PC-3 (cell line): ENCODE measurements at regions of chr6 and their contacts with region 1.

Region 1: DNA sequence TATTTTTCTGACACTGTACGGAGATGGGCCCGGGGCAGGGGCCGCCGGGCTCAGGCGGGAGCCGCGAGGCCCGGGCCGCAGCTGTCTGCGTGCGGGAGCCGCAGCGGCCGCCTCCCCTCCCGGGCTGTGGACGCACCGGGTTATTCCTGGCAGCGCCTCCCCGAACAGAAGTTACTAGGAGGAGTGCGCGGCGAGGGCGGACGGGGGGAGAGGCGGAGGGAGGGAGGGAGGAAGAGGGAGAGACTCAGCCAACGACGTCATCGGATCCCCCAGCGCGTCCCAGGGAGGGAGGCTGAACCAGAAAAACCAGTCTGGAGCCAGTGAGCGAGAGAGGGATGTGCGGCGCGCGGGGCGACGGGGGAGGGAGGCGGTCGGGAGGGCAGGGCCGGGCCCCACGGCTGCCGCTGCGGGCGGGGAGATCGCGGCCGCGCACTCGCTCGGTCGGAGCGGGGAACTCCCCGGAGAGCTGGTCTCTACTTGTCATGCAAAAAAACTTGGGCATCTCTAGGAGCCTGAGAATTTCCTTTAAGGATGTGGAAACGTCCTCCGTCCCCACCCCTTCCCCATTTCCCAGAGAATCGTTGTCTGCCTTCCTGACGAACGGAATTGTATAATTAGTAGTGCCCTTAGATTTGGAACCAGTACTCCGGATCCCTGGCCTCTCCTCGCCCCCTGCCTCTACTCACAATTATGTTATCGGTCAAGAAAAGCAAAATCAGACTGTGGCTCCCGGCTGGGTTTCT is 1.4 kb upstream of the HIVEP2 start:
- DNase-seq: peak; percentile 96
- ATAC-seq: peak; percentile 54
- H3K4me3 ChIP-seq: peak overlapping the region; percentile 94
- H3K27ac ChIP-seq: peak overlapping the region; percentile 92
- H3K4me1 ChIP-seq: peaks cover 23% of the 10 kb centered on the region
- H3K27me3 ChIP-seq: no peaks in the 10 kb centered on the region
- CTCF ChIP-seq: no peak

Region 2: GRCh38 chr6:142833054-142833453 is 113.3 kb before region 1 on chr6:
- CTCF ChIA-PET with region 1: no interaction called
- POLR2A ChIA-PET with region 1: no interaction called
- intact Hi-C with region 1: loop called (anchors 2 kb)
- DNase-seq: peak; percentile 93
- ATAC-seq: peak; percentile 90
- H3K4me3 ChIP-seq: no peak overlapping the region; the same call in 1 of the 2 replicates
- H3K27ac ChIP-seq: peak overlapping the region; percentile 91
- H3K4me1 ChIP-seq: peaks cover 23% of the 10 kb centered on the region
- H3K27me3 ChIP-seq: no peaks in the 10 kb centered on the region
- CTCF ChIP-seq: no peak

Region 3: DNA sequence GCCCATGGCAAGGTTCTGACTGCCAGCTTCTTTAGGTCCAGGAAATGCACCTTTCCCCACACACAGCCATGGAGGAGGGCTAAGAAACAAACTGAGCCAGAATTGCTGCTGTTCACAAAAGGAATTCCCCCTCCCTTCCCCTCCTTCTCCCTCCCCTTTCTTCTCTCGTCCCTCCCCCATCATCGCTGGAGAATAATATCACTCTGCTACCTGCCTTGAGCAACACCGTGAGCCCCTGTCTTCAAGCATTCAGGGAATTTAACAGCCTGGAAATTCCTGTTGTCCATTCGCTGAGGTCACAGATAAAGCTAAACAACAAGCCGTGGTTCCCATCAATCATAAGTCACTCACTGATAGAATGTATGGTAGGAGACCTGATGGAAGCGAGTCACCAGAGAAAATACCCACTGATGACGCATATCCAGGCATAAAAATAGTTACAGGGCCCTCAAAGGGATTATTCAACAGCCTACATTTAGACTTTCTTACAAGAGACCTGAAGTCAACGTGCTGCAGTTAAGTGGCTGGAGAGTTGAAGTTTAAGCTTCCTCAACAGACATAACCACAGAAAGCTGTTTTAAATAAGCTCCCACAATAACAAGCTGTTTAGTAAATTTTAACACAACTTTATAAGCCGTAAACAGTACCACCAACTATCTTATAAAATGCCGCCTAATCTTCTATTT is 61.0 kb before region 1 on chr6:
- CTCF ChIA-PET with region 1: no interaction called
- POLR2A ChIA-PET with region 1: interaction called, 3 read pairs
- intact Hi-C with region 1: loop called (anchors 5 kb)
- DNase-seq: peak; percentile 94
- ATAC-seq: peak; percentile 90
- H3K4me3 ChIP-seq: peak overlapping the region; percentile 26; the same call in 1 of the 2 replicates
- H3K27ac ChIP-seq: peak overlapping the region; percentile 96
- H3K4me1 ChIP-seq: peaks cover 38% of the 10 kb centered on the region
- H3K27me3 ChIP-seq: no peaks in the 10 kb centered on the region
- CTCF ChIP-seq: no peak

Region 4: DNA sequence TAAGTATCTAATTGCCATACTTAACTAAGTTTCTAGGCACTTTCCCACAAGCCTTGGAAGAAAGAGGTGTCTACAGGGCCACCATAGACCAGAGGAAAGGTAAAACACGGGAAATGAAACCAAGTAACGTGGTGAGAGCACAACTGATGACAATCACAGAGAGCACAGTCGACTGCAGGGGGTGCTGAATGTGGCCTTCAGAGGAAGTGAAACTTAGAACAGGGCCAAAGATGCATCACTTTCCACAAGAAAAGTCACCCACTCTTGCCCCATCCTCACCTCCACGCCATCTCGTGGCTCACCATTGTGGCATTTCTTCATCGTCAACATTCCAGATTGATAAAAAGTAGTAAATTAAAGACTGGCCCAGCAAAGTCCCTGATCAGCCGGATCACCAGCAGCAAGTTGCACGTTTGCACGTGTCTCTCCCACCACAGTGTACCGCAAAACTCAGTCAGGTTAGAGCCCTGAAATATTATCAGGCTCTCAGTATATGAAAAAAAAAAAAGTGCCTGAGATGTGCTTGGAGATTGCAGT is 32.8 kb before region 1 on chr6:
- CTCF ChIA-PET with region 1: no interaction called
- POLR2A ChIA-PET with region 1: no interaction called
- intact Hi-C with region 1: no loop called
- DNase-seq: no peak
- ATAC-seq: no peak
- H3K4me3 ChIP-seq: no peak overlapping the region
- H3K27ac ChIP-seq: no peak overlapping the region
- H3K4me1 ChIP-seq: no peaks in the 10 kb centered on the region
- H3K27me3 ChIP-seq: no peaks in the 10 kb centered on the region
- CTCF ChIP-seq: no peak

Region 5: GRCh38 chr6:143060354-143060805 is 114.0 kb after region 1 on chr6:
- CTCF ChIA-PET with region 1: no interaction called
- POLR2A ChIA-PET with region 1: no interaction called
- intact Hi-C with region 1: loop called (anchors 1 kb)
- DNase-seq: peak; percentile 67
- ATAC-seq: peak; percentile 73
- H3K4me3 ChIP-seq: peak overlapping the region; percentile 90
- H3K27ac ChIP-seq: peak overlapping the region; percentile 89
- H3K4me1 ChIP-seq: peaks cover 22% of the 10 kb centered on the region
- H3K27me3 ChIP-seq: no peaks in the 10 kb centered on the region
- CTCF ChIP-seq: peak; percentile 20; the same call in 1 of the 2 replicates

Region 6: DNA sequence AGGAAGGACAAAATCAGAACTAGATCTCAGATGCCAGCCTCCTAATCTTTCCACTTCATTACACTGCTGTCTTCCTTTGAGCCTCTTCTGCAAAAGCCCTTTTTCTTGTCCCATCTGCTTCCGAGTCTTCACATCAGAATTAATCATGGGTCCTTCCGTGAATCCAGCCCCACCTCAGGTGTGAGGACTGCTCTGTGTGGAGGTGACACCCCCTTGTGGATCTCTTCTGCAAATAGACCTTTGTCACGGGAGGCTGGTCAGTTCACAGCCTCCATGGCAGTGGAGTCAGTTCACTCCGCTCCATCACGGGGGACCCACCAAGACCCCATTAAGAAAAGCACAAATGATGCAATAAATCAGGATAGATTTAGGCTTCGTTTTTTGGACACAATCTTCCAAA is 333.0 kb after region 1 on chr6:
- CTCF ChIA-PET with region 1: no interaction called
- POLR2A ChIA-PET with region 1: no interaction called
- intact Hi-C with region 1: loop called (anchors 10 kb)
- DNase-seq: peak; percentile 25
- ATAC-seq: no peak; the same call in 1 of the 2 replicates
- H3K4me3 ChIP-seq: no peak overlapping the region
- H3K27ac ChIP-seq: no peak overlapping the region
- H3K4me1 ChIP-seq: no peaks in the 10 kb centered on the region
- H3K27me3 ChIP-seq: no peaks in the 10 kb centered on the region
- CTCF ChIP-seq: peak; percentile 51

Region 7: GRCh38 chr6:143427109-143427817 is 480.9 kb after region 1 on chr6:
- CTCF ChIA-PET with region 1: no interaction called
- POLR2A ChIA-PET with region 1: no interaction called
- intact Hi-C with region 1: loop called (anchors 2 kb)
- DNase-seq: peak; percentile 82
- ATAC-seq: peak; percentile 99
- H3K4me3 ChIP-seq: no peak overlapping the region
- H3K27ac ChIP-seq: peak overlapping the region; percentile 31
- H3K4me1 ChIP-seq: peaks cover 6% of the 10 kb centered on the region
- H3K27me3 ChIP-seq: no peaks in the 10 kb centered on the region
- CTCF ChIP-seq: peak; percentile 93